AG04449 (cell line): ENCODE measurements at regions of chr19 and their contacts with region 1.

Region 1: DNA sequence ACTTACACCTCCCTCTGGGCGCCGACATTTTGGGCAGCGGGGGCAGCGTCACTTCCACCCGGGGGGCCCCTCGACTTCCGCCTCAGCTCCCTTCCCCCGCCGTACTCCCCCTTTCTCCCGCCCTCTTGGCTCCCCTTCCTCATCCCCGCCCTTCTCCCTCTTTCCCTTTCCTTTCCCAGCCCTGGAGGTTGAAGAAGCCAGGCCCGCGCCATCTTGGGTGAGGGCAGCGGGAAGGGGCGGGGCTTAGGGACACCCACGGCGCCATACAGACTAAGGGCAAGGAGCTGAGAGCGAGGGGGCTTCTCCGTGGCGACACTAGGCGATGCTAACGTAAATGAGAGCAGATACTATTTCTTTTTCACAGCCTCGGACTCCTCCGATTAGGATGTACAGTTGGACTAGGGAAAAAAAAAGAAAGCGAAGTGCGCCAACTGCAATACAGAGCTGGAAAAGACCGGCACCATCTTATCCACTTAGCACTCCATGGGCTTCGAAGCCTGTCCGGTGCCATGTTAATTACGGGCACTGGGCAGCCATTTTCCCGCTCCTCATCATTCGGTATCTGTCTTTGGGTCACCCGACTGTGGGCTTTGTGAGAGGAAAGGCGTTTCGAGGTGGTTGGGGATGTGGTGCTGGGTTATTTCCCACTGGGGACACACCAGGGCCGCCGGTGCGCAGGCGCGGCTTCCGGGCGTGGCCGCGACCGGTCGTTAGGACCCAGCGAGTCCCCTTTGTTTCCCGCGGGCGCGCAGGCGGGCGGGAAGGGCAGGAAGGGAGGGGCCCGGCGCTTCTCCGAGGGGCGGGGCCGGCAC is at the start of gene FIZ1:
- DNase-seq: peak; percentile 88
- H3K4me3 ChIP-seq: peak within 1 kb of the TSS; percentile 87
- CTCF ChIP-seq: no peak

Region 2: GRCh38 chr19:55437410-55438075 is 162.1 kb before region 1 on chr19:
- CTCF ChIA-PET with region 1: no interaction called
- POLR2A ChIA-PET with region 1: no interaction called
- DNase-seq: no peak
- H3K4me3 ChIP-seq: no peak overlapping the region
- CTCF ChIP-seq: no peak

Region 3: GRCh38 chr19:55516878-55517620 is 82.6 kb before region 1 on chr19:
- CTCF ChIA-PET with region 1: interaction called, 43 read pairs
- POLR2A ChIA-PET with region 1: interaction called, 5 read pairs
- DNase-seq: peak; percentile 40
- H3K4me3 ChIP-seq: peak overlapping the region; percentile 46
- CTCF ChIP-seq: peak; percentile 99